Body of pancreas (tissue), 4 donors: ENCODE measurements at regions of chr11 and their contacts with region 1.

Region 1: GRCh38 chr11:7994581-7995278 is 7.6 kb downstream of the EIF3F start:
- DNase-seq: no peak
- ATAC-seq: no peak
- H3K4me3 ChIP-seq: no peak overlapping the region
- H3K27ac ChIP-seq: no peak overlapping the region
- H3K4me1 ChIP-seq: peaks cover 4% of the 10 kb centered on the region
- H3K27me3 ChIP-seq: no peaks in the 10 kb centered on the region
- CTCF ChIP-seq: no peak
- POLR2A ChIP-seq: no peak

Region 2: GRCh38 chr11:7904914-7905313 is 89.8 kb before region 1 on chr11:
- intact Hi-C with region 1: loop called (anchors 5 kb)
- DNase-seq: no peak
- ATAC-seq: no peak
- H3K4me3 ChIP-seq: no peak overlapping the region
- H3K27ac ChIP-seq: no peak overlapping the region
- H3K4me1 ChIP-seq: peaks cover 20% of the 10 kb centered on the region
- H3K27me3 ChIP-seq: no peaks in the 10 kb centered on the region
- CTCF ChIP-seq: peak in 4 of 7 experiments; percentile 34 to 59 (median 46)
- POLR2A ChIP-seq: no peak

Region 3: GRCh38 chr11:8033305-8034105 is 38.8 kb after region 1 on chr11:
- intact Hi-C with region 1: no loop called
- DNase-seq: peak; percentile 80 to 88 (median 84)
- ATAC-seq: peak; percentile 88
- H3K4me3 ChIP-seq: no peak overlapping the region
- H3K27ac ChIP-seq: no peak overlapping the region
- H3K4me1 ChIP-seq: peaks cover 7% of the 10 kb centered on the region
- H3K27me3 ChIP-seq: peaks cover 0 to 4% of the 10 kb centered on the region in 2 donors
- CTCF ChIP-seq: peak; percentile 79 to 90 (median 85)
- POLR2A ChIP-seq: no peak